ENCODE measurements at regions of chr12 and their contacts with region 1.

Region 1: GRCh38 chr12:4538207-4539160 is at the start of gene RAD51AP1:
- DNase-seq: peak; percentile 74 to 96
- H3K4me3 ChIP-seq: peak within 1 kb of the TSS; percentile 75 to 86
- H3K27ac ChIP-seq: peak within 1 kb of the TSS; percentile 86 to 94
- H3K4me1 ChIP-seq: peaks cover 4 to 13% of the 10 kb centered on the region in 2 donors
- H3K27me3 ChIP-seq: no peaks in the 10 kb centered on the region
- CTCF ChIP-seq: no peak
- total RNA-seq, gene RAD51AP1: not detected

Region 2: DNA sequence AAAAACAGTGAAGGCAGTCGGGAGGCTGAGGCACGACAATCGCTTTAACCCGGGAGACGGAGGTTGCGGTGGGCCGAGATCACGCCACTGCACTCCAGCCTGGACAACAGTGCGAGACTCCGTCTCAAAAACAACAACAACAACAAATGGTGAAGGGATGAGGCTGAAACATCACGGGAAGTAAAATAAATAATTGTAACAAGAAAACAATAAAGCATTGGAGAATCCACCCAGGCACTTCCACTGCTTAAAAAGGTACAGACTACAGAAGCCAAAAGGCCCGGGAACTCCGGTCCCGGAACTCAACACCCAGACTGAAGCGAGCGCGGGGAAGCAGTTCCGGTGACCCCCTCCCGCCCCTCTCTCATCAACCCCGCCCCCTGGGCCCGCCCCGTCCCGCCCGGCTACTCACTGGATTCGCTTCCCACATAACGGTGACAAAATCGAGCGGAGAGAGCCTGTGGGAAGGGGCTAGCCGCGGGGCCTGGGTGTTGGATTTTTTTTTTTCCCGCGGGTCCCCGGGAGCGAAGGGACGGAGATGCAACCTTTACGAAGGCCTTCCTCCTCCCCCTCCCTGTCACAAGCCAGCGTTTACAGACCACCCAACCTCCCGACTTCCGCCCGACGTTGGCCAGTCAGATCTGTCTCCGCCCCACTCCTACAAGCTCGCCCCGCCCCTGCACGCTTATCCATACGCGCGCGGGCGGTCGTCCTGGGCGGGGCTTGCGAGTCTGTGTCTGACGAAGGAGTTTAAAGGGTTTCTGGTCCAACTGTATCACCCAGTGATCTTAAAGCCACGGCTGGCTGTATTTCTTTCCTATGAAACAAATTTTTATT is 665.5 kb before region 1 on chr12 and contains the start of gene PARP11:
- intact Hi-C with region 1: loop called (anchors 2 kb)
- DNase-seq: peak; percentile 93 to 99
- H3K4me3 ChIP-seq: peak within 1 kb of the TSS; percentile 49 to 80
- H3K27ac ChIP-seq: peak within 1 kb of the TSS; percentile 93 to 94
- H3K4me1 ChIP-seq: peaks cover 4 to 13% of the 10 kb centered on the region in 2 donors
- H3K27me3 ChIP-seq: no peaks in the 10 kb centered on the region
- CTCF ChIP-seq: no peak
- total RNA-seq, gene PARP11: 4.2 TPM

Region 3: GRCh38 chr12:4030929-4031702 is 507.4 kb before region 1 on chr12:
- intact Hi-C with region 1: loop called (anchors 5 kb)
- DNase-seq: peak; percentile 81 to 97
- H3K4me3 ChIP-seq: peak overlapping the region; percentile 51 to 77
- H3K27ac ChIP-seq: peak overlapping the region; percentile 87 to 90
- H3K4me1 ChIP-seq: peaks cover 5 to 6% of the 10 kb centered on the region in 2 donors
- H3K27me3 ChIP-seq: no peaks in the 10 kb centered on the region
- CTCF ChIP-seq: peak in 1 of 3 experiments; percentile 6

Region 4: GRCh38 chr12:4320853-4321701 is 217.4 kb before region 1 on chr12 and contains the start of gene TIGAR:
- intact Hi-C with region 1: loop called (anchors 5 kb)
- DNase-seq: peak; percentile 84 to 96
- H3K4me3 ChIP-seq: peak within 1 kb of the TSS; percentile 84 to 88
- H3K27ac ChIP-seq: peak within 1 kb of the TSS; percentile 76 to 93
- H3K4me1 ChIP-seq: peaks cover 4% of the 10 kb centered on the region in 2 donors
- H3K27me3 ChIP-seq: no peaks in the 10 kb centered on the region
- CTCF ChIP-seq: no peak
- total RNA-seq, gene TIGAR: 4.4 TPM

Region 5: GRCh38 chr12:4591180-4591687 is 52.8 kb after region 1 on chr12:
- intact Hi-C with region 1: no loop called
- DNase-seq: no peak
- H3K4me3 ChIP-seq: no peak overlapping the region
- H3K27ac ChIP-seq: no peak overlapping the region
- H3K4me1 ChIP-seq: no peaks in the 10 kb centered on the region
- H3K27me3 ChIP-seq: no peaks in the 10 kb centered on the region
- CTCF ChIP-seq: no peak

Region 6: GRCh38 chr12:4604684-4605193 is 66.3 kb after region 1 on chr12:
- intact Hi-C with region 1: loop called (anchors 5 kb)
- DNase-seq: peak; percentile 34 to 92
- H3K4me3 ChIP-seq: peak overlapping the region; percentile 56 to 78
- H3K27ac ChIP-seq: peak overlapping the region; percentile 46 to 49
- H3K4me1 ChIP-seq: no peaks in the 10 kb centered on the region
- H3K27me3 ChIP-seq: no peaks in the 10 kb centered on the region
- CTCF ChIP-seq: peak; percentile 72 to 100 (median 99)

Region 7: DNA sequence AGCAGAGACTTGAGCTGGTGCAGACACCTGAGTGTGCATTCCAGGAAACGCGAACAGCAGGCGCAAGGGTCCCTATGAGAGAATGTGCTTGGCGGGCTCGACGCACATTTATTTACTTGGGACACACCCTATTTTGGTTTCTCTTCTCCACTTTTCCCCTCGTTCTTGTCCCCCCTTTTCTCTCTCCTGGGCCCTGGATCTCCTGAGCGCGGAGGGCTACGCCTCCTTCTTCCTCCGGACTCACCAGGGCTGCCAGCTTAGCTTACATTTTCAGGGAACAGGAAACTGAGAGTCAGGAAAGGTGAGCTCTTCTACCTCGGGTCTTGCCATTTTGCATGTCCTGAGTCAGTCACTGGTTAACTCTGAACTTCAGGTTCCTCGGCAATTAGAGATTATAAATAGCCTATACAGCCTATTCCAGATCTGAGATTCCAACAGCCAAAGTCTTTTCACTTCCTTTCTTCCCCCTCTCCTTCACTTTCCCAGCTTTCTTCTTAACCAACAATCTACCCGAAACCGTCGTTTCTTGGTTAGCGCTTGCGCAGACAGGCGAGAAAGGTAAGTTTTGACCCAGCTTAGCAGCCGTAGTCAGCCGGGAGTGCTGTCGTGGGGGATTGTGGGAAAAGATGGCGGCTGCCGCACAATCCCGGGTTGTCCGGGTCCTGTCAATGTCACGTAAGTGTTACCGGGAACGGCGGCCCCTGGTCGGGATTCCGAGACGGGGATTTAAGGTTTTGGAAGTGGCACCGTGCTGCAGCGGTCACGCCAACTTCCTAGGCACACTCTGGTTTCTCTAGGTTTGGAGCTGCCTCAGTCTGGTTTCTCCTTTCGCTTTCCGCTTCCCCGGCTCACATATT is 110.2 kb after region 1 on chr12 and contains the starts of genes AKAP3 and NDUFA9:
- intact Hi-C with region 1: loop called (anchors 2 kb)
- DNase-seq: peak; percentile 10 to 87
- H3K4me3 ChIP-seq: peak within 1 kb of the TSS; percentile 72 to 87
- H3K27ac ChIP-seq: peak within 1 kb of the TSS; percentile 86
- H3K4me1 ChIP-seq: peaks cover 8 to 15% of the 10 kb centered on the region in 2 donors
- H3K27me3 ChIP-seq: no peaks in the 10 kb centered on the region
- CTCF ChIP-seq: no peak
- total RNA-seq, gene AKAP3: 2.8 TPM
- total RNA-seq, gene NDUFA9: 1.5 TPM

Region 8: GRCh38 chr12:4997939-4998338 is 459.5 kb after region 1 on chr12:
- intact Hi-C with region 1: loop called (anchors 10 kb)
- DNase-seq: peak; percentile 65 to 94
- H3K4me3 ChIP-seq: no peak overlapping the region
- H3K27ac ChIP-seq: peak overlapping the region; percentile 76 to 90
- H3K4me1 ChIP-seq: peaks cover 2 to 14% of the 10 kb centered on the region in 2 donors
- H3K27me3 ChIP-seq: no peaks in the 10 kb centered on the region
- CTCF ChIP-seq: no peak

Measured in ascending aorta (tissue), 2 donors.